ENCODE measurements at regions of chr10 and their contacts with region 1.

Region 1: GRCh38 chr10:132536971-132537712 is 445 bp upstream of the INPP5A start:
- DNase-seq: peak; percentile 100
- H3K4me3 Mint-ChIP-seq: peak overlapping the region; percentile 70
- H3K27ac Mint-ChIP-seq: no peak overlapping the region
- H3K4me1 Mint-ChIP-seq: peaks cover 42% of the 10 kb centered on the region
- H3K27me3 Mint-ChIP-seq: peaks cover 7% of the 10 kb centered on the region

Region 2: DNA sequence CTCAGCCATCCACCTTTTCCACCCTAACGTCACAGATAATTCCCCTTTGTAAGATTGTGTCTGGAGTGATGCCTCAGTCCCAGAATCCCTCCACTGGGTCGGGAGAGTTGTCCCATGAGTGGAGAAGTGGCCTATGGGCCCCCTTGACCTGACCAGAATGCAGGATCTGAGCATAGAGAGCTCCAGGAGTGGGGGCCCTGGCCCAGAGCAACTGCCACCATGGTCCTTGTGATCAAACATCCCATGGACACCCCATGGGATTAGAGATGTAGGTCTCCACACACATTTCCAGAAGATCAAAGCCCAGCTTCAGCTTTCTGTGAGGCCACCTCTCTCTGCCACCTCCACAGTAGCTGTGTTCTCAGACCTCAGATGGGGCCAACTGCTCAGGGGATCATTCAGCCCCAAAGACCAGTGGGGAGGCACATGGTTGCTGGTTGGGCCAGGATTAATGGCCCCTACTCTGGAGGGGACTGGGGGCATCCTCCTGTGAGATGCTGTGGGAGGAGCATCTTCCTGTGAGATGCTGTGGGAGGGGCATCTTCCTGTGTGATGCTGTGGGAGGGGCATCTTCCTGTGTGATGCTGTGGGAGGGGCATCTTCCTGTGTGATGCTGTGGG is 378.9 kb before region 1 on chr10:
- intact Hi-C with region 1: loop called (anchors 1 kb)
- DNase-seq: peak; percentile 40
- H3K4me3 Mint-ChIP-seq: no peak overlapping the region
- H3K27ac Mint-ChIP-seq: peak overlapping the region; percentile 83
- H3K4me1 Mint-ChIP-seq: peaks cover 28% of the 10 kb centered on the region
- H3K27me3 Mint-ChIP-seq: peaks cover 2% of the 10 kb centered on the region

Region 3: DNA sequence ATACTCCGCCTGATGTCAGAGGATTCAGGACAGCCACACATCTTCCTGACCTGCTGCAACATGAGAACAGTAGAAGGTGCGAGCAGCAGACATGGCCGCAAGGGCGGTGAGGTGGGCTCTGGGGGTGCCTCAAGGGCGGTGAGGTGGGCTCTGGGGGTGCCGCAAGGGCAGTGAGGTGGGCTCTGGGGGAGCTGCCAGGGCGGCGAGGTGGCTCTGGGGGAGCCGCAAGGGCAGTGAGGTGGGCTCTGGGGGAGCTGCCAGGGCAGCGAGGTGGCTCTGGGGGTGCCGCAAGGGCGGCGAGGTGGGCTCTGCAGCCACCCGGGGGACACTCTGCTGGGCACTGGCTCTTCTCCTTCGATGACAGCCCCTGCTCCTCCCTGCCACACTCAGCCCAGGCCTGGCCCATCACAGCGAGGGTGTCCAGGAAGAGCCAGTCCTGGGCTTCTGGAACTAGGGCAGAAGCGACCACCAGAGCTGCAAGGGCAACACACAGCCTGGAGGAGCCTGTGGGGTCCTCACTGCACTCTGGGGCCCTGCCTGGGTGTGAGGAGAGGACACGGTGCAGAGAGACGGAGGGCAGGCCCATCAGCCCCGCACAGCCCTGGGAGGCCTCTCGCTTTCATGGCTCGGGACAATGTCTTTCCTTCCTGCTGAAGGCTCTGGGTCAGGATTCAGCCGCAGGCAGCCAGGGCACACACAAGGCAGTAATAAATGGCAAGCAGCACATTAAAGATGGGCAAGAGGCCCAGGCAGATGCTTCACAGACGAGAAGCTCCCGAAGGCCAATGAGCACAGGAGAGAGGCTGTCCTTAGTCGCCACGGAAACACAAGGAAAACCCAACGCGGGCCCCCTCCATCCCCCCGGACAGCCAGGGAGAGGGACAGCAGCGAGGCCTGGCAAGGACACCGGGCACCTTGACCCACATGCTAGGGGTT is 271.9 kb before region 1 on chr10:
- intact Hi-C with region 1: no loop called
- DNase-seq: no peak
- H3K4me3 Mint-ChIP-seq: no peak overlapping the region
- H3K27ac Mint-ChIP-seq: no peak overlapping the region
- H3K4me1 Mint-ChIP-seq: no peaks in the 10 kb centered on the region
- H3K27me3 Mint-ChIP-seq: peaks cover 2% of the 10 kb centered on the region

Region 4: DNA sequence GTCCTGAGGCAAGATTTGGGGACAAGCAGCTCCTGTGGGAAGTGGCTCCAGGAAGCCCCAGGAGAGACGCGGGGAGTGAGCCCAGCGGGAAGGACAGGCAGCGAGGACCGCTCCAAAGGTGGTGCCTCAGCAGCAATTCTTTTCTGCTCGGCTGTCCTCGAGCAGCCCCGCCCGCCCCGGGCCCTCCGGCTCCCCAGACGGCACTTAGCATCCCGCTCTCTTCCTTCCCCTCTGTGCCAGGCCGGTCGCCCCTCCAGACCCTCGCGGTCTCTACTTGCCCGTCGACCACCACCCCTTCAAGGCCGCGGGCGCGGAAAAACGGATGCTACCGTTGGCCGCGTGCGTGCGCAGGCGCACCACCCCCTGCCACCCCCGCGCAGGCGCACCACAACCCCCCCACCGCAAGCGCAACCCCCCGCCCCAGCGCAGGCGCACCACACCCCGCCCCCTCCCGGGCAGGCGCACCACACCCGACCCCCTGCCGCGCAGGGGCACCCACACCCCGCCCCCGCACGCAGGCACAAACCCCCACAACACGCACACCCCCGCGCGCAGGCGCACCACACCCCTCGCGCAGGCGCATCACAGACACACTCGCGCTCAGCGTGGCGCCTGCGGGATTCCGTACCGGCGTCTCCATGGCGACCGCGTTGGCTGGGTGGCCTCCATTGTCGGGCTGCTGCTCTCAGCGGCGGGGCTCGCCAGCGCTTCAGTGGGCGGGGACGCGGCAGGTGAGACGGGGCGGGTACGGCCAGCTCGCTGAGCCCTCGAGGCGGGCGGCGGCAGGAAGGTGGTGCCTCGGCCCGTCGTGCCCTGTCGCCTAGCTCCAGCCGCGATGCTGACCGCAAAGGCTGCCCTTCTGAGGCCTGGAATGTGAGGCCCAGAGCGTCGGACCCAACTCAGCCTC is 205.4 kb before region 1 on chr10 and contains the start of gene LRRC27:
- intact Hi-C with region 1: loop called (anchors 1 kb)
- DNase-seq: peak; percentile 100
- H3K4me3 Mint-ChIP-seq: peak within 1 kb of the TSS; percentile 91
- H3K27ac Mint-ChIP-seq: peak within 1 kb of the TSS; percentile 96
- H3K4me1 Mint-ChIP-seq: peaks cover 58% of the 10 kb centered on the region
- H3K27me3 Mint-ChIP-seq: peaks cover 3% of the 10 kb centered on the region
- total RNA-seq, gene LRRC27: 1.7 and 3.4 TPM in 2 replicates

Region 5: DNA sequence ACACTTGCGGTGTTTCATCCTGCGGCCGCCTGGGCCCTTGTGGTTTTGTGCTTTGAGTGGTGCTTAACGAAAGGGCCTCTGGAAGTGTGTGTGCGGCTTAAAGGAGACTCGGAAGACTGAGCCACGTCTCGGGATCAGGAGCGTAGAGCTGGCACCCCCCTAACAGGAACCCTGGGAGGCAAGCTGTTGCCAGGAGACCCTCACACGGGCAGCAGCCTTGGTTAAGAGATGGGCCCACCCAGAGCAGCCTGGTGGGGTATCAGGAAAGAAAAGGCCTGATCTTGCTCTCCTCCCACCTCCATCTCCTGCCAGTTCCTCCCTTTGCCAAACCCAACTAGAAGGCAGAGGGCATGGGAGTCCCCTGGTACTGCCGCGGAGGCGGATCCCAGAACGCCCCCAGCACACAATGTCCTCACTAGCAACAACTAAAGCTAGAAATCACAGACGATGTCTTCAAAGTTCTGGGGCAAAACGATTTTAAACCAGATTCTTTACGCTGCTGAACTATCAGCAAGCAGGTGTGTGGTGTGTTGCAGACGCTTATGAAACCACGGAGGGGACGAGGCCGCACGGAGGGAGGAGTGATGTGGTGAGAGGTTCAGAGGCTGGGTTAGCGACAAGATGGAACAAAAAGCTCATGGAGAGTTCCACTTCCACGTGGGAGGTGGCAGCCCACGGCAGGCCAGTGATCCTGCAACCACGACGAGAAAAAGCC is 66.6 kb before region 1 on chr10:
- intact Hi-C with region 1: loop called (anchors 2 kb)
- DNase-seq: no peak
- H3K4me3 Mint-ChIP-seq: no peak overlapping the region
- H3K27ac Mint-ChIP-seq: peak overlapping the region; percentile 49
- H3K4me1 Mint-ChIP-seq: peaks cover 8% of the 10 kb centered on the region
- H3K27me3 Mint-ChIP-seq: peaks cover 17% of the 10 kb centered on the region

Region 6: GRCh38 chr10:132616170-132616995 is 79.2 kb after region 1 on chr10:
- intact Hi-C with region 1: loop called (anchors 1 kb)
- DNase-seq: peak; percentile 52
- H3K4me3 Mint-ChIP-seq: peak overlapping the region; percentile 10
- H3K27ac Mint-ChIP-seq: peak overlapping the region; percentile 85
- H3K4me1 Mint-ChIP-seq: peaks cover 14% of the 10 kb centered on the region
- H3K27me3 Mint-ChIP-seq: peaks cover 4% of the 10 kb centered on the region

Region 7: DNA sequence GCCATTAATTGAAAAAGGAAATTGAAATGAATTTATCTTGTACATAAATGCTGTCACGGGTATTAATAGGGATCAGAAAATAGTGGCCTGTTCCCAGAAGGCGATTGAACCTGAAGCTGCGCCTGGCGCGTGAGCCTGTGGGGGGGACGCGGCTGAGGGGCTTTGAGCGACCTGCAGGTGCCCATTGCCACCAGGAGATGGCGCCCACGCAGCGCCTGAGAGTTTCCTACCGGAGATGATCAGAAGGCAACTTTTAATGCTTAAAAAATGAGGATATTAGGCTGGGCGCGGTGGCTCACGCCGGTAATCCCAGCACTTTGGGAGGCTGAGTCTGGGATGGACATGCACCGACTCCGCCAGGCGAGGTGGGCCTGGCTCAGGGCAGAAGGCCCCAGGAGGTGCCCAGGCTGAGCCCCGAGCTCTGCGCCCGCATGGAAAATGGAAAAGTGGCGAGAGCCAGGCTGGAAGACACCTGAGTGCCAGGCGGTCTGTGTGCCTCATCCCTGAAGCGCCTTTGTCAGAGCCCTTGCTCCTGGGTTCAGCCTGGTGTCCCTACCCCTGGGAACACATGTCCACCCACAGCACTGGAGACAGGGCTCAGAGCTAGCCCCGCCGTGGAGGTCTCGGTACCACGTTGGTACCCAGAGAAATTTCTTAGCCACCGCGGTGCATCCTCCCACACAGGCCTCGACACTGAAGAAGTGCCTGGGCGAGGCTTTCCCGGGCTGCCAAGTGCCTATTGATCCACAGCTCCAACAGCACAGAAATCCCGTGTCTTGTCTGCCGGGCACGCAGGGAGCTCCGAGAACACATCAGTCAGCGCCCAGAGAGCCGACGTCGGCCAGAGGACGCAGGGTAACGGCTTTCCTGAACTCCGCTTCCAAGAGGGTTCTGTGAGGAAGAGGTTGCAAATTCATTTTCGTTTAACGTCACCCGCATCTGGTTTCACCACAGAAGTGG is 117.8 kb after region 1 on chr10:
- intact Hi-C with region 1: no loop called
- DNase-seq: no peak
- H3K4me3 Mint-ChIP-seq: no peak overlapping the region
- H3K27ac Mint-ChIP-seq: no peak overlapping the region
- H3K4me1 Mint-ChIP-seq: no peaks in the 10 kb centered on the region
- H3K27me3 Mint-ChIP-seq: no peaks in the 10 kb centered on the region

Region 8: DNA sequence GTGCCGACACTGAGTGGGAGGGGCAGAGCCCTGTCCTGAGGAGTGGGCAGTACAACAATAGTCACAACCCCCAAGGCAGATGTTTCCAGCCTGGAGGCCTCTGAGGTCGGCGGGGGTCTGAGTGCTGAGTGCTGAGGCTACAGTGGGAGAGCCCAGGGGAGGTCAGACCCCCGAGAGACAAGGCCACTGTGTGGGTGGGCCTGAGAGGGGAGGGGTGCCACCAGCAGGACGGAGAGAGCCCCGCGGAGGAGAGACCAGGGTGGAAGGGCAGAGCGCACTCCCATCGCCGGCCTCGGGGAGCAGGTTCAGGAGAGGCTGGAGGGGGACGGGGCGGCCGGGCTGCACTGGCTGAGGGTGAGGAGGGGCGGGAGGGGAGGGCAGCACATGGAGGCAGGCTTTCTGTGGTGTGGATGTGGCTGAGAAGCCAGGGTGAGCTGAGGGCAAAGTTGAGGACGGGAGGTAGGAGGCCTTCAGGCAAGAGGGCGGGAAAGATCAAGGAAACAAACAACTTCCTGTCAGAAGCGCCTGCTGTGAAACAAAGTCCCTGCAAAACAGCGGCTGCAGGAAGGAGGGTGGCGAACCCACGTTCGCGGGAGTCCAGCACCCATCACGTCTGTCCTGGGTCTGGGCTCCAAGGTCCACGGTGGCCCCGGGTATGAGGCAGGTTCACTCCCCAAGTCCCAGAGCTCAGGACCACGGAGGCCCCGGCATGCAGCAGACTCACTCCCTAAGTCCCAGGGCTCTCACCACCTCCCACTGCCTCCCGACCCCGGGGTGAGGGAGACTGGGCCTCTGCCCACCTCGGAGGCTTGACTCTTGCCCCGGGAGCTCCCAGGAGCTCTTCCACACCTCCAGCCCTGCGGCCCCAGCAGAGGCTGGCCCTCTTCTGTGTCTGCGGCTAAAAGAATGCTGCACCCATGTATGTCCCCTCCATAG is 325.6 kb after region 1 on chr10:
- intact Hi-C with region 1: no loop called
- DNase-seq: no peak
- H3K4me3 Mint-ChIP-seq: no peak overlapping the region
- H3K27ac Mint-ChIP-seq: no peak overlapping the region
- H3K4me1 Mint-ChIP-seq: no peaks in the 10 kb centered on the region
- H3K27me3 Mint-ChIP-seq: no peaks in the 10 kb centered on the region

Region 9: GRCh38 chr10:133378251-133379096 is 841.3 kb after region 1 on chr10:
- intact Hi-C with region 1: loop called (anchors 1 kb)
- DNase-seq: peak; percentile 51
- H3K4me3 Mint-ChIP-seq: peak overlapping the region; percentile 79
- H3K27ac Mint-ChIP-seq: peak overlapping the region; percentile 44
- H3K4me1 Mint-ChIP-seq: peaks cover 11% of the 10 kb centered on the region
- H3K27me3 Mint-ChIP-seq: peaks cover 16% of the 10 kb centered on the region

Measured in activated T-helper 1 cell treated with anti-CD3 and anti-CD28 coated beads, Interleukin-12 subunit alpha, Interleukin-12 subunit beta, Interleukin-2, Interleukin-4 antibody, amounts not matched to agents 30 ng/mL and 10 ng/mL and 1 ng/mL, durations not matched to agents 14 hours and 24 hours and 36 hours (primary cell).